ENCODE measurements at regions of chr1 and their contacts with region 1.

Region 1: DNA sequence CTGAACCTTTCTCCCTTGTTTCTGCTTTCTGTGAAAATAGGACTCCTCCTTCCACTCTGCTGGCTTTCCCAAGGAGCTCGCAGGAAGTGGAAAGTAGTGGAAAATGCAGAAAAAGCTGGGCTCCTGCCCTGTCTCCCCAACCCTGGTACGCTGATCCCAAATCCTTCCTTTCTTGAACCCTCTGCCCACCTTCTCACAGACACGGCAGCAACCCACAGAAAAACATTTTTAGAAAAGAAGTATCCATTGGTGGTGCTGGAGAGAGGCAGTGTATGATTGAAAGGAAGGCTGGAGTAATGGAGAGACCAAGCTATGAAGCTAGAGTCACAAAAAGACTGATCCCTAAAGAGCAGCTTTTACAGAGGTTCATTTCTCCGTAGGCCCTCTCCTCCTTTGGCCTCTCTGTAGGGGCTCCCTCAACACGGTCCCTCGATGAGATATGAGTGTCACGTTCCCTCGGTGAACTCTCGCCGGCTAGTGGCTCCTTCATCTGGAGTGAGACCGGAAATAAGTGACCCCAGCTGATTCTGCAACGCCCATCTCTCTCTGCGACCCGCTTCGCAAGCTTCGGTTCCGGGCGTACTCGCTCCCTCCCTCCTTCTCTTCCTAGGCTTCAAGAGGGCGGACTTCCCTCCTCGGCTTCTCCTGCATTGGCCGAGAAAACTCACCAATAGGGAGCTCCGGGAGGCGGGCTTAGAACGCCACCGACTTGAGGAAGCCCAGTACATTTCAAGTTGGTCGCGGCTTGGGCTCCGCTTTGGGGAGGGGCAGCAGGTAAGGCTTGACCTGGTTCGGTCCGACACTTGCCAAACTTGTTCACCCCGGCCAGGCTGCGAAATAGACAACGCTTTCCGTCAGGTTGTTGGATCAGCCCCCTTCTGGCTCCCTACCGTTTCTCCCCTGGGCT is at the starts of genes ANKRD34A and POLR3GL:
- DNase-seq: peak; percentile 88 to 97 (median 90)
- H3K4me3 ChIP-seq: peak within 1 kb of the TSS; percentile 65 to 94
- H3K4me3 Mint-ChIP-seq: peak within 1 kb of the TSS; percentile 89 to 95 (median 93)
- H3K27ac ChIP-seq: peak within 1 kb of the TSS; percentile 71
- H3K27ac Mint-ChIP-seq: peak within 1 kb of the TSS; percentile 89 to 99 (median 98)
- H3K4me1 ChIP-seq: peaks cover 62% of the 10 kb centered on the region
- H3K4me1 Mint-ChIP-seq: peaks cover 32 to 72% (median 45%) of the 10 kb centered on the region in 4 donors
- H3K27me3 ChIP-seq: no peaks in the 10 kb centered on the region
- H3K27me3 Mint-ChIP-seq: no peaks in the 10 kb centered on the region
- total RNA-seq, gene ANKRD34A: 1.8 to 2.1 TPM
- total RNA-seq, gene POLR3GL: 36.6 to 38.3 TPM

Region 2: DNA sequence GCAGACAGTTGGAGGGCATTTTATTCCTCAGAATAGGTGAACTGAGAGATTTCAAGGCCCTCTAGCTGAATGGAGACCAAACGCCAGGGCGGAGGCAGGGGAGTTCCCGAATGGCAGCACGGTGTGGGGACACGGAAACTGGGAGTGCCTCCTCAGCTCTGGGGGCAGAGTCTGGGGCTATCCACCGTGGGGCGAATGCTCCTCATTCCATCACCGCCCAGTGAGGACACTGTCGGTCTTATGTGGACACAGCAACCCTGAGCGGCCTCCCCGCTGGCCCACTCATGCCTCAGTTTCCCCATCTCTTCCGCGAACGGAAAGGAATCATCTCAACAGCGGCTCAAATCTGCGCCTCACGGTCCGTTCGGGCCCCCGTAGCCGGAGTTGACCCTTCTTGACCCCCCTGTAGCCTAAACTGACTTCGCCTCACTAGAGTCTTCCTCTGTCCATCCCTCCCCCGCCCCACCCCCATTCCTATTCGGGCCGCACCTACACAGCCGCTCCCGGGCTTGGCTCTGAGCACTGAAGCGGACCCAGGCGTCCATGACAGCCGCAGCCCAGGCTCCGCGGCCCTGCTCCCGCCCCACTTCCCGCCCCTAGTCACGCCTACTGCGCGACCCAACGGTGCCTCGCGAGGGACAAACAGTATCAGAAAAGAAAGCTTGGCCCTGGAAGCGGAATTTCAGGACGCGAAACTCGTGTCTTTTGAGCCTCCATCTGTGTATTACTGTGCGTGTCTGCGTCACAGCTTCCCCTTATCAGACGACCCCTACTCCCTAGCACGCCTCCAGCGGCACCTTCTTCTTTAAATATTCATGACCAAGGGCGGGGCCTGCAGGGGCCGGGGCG is 45.9 kb before region 1 on chr1 and contains the start of gene PEX11B:
- CTCF ChIA-PET with region 1: interaction called, 6 read pairs
- POLR2A ChIA-PET with region 1: interaction called, 61 read pairs
- intact Hi-C with region 1: loop called (anchors 5 kb)
- DNase-seq: peak; percentile 90 to 96 (median 92)
- H3K4me3 ChIP-seq: peak within 1 kb of the TSS; percentile 90 to 96
- H3K4me3 Mint-ChIP-seq: peak within 1 kb of the TSS; percentile 89 to 96 (median 92)
- H3K27ac ChIP-seq: peak within 1 kb of the TSS; percentile 79
- H3K27ac Mint-ChIP-seq: peak within 1 kb of the TSS; percentile 91 to 97 (median 95)
- H3K4me1 ChIP-seq: peaks cover 28% of the 10 kb centered on the region
- H3K4me1 Mint-ChIP-seq: peaks cover 24 to 45% (median 35%) of the 10 kb centered on the region in 4 donors
- H3K27me3 ChIP-seq: no peaks in the 10 kb centered on the region
- H3K27me3 Mint-ChIP-seq: no peaks in the 10 kb centered on the region
- total RNA-seq, gene PEX11B: 34.7 to 38.7 TPM

Region 3: DNA sequence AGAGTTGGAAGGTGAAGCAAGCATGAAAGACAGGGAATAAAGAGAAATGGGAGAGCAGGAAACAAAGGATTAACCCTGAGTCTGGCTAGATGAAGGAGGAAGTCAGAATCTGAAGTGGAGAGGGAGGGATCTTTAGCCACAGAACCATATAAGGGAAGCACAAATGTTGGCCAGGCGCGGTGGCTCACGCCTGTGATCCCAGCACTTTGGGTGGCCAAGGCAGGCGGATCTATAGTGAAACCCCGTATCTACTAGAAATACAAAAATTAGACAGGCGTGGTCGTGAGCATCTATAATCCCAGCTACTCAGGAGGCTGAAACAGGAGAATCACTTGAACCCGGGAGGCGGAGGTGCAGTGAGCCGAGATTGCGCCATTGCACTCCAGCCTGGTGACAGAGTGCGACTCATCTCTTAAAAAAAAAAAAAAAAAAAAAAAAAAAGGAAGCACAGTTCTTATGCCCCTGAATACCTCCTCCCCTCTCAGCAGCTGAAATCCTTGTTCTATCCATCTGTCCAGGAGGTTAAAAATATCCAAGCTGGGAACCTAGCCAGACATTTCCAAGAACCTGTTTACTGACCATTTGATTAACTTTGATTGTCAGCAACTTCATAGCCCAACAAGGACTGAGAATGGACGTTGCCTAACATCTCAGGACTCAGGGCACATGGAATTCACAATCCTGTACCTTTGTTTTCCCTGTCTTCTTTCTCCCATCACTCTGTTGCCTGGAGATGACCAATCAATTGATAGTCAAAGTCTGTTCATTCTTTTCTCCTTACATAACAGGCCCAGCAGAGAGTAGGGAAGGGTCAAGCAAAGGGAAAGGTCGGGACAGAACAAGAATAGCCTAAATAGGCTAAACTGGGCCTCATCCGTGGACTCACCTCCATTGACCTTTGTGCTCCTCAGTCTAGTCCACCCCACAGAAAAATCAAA is 21.5 kb after region 1 on chr1:
- CTCF ChIA-PET with region 1: interaction called, 98 read pairs
- POLR2A ChIA-PET with region 1: interaction called, 370 read pairs
- intact Hi-C with region 1: no loop called
- DNase-seq: no peak
- H3K4me3 ChIP-seq: peak overlapping the region in 1 of 2 donors; percentile 15
- H3K4me3 Mint-ChIP-seq: peak overlapping the region; percentile 52 to 92 (median 76)
- H3K27ac ChIP-seq: no peak overlapping the region
- H3K27ac Mint-ChIP-seq: peak overlapping the region in 6 of 7 donors; percentile 88 to 94 (median 92)
- H3K4me1 ChIP-seq: peaks cover 85% of the 10 kb centered on the region
- H3K4me1 Mint-ChIP-seq: peaks cover 25 to 67% (median 43%) of the 10 kb centered on the region in 4 donors
- H3K27me3 ChIP-seq: no peaks in the 10 kb centered on the region
- H3K27me3 Mint-ChIP-seq: no peaks in the 10 kb centered on the region

Region 4: DNA sequence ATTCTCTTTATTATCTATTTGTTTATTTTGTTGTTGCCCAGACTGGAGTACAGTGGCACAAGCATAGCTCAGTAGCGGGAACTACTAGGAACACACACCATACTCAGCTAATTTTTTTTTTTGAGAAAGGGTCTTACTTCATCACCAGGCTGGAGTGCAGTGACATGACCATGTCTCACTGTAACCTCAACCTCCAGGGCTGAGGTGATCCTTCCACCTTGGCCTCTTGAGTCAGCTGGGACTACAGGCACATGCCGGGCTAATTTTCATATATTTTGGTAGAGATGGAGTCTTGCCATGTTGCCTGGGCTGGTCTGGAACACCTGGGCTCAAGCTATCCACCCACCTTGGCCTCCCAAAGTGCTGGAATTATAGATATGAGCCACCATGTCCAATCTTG is 37.5 kb after region 1 on chr1:
- CTCF ChIA-PET with region 1: interaction called, 33 read pairs
- POLR2A ChIA-PET with region 1: interaction called, 370 read pairs
- intact Hi-C with region 1: loop called (anchors 5 kb)
- DNase-seq: no peak
- H3K4me3 ChIP-seq: no peak overlapping the region
- H3K4me3 Mint-ChIP-seq: peak overlapping the region in 7 of 8 donors; percentile 17 to 81 (median 62)
- H3K27ac ChIP-seq: no peak overlapping the region
- H3K27ac Mint-ChIP-seq: peak overlapping the region; percentile 57 to 93 (median 84)
- H3K4me1 ChIP-seq: peaks cover 88% of the 10 kb centered on the region
- H3K4me1 Mint-ChIP-seq: peaks cover 46 to 85% (median 65%) of the 10 kb centered on the region in 4 donors
- H3K27me3 ChIP-seq: no peaks in the 10 kb centered on the region
- H3K27me3 Mint-ChIP-seq: no peaks in the 10 kb centered on the region

Region 5: GRCh38 chr1:146036965-146037646 is 72.9 kb after region 1 on chr1:
- CTCF ChIA-PET with region 1: interaction called, 3 read pairs
- POLR2A ChIA-PET with region 1: interaction called, 54 read pairs
- intact Hi-C with region 1: no loop called
- DNase-seq: peak; percentile 82 to 85 (median 84)
- H3K4me3 ChIP-seq: peak overlapping the region; percentile 65 to 77
- H3K4me3 Mint-ChIP-seq: peak overlapping the region; percentile 93 to 99 (median 97)
- H3K27ac ChIP-seq: peak overlapping the region; percentile 62
- H3K27ac Mint-ChIP-seq: peak overlapping the region; percentile 94 to 100 (median 97)
- H3K4me1 ChIP-seq: peaks cover 25% of the 10 kb centered on the region
- H3K4me1 Mint-ChIP-seq: peaks cover 16 to 56% (median 29%) of the 10 kb centered on the region in 4 donors
- H3K27me3 ChIP-seq: no peaks in the 10 kb centered on the region
- H3K27me3 Mint-ChIP-seq: peaks cover 2 to 27% of the 10 kb centered on the region in 2 donors